ENCODE measurements at regions of chr5 and their contacts with region 1.

Region 1: DNA sequence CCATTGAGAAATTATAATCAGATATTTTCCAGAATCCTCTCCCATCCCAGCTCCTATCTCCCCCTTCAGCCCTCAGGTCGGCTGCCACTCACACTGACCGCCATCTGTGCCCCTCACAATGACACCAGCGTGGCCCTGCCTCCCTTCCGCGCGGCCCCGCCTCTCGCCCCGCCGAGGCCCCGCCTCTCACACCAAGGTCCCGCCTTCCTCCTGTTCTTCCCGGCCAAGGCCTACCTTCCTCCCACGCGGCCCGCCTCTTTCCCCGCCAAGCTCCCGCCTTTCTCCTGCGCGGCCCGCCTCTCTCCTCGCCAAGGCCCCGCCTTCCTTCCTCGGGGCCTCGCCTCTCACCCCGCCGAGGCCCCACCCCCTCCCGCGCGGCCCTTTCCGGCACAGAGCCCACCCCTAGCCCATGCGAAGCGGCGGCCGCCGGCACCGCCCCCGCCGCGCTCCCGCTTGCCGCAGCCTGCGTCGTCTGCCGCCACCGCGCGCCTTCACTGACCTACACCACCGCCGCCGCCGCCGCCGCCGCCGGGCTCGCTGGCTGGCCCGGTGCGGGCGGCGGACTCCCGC is at the start of gene DNAJC21:
- DNase-seq: peak; percentile 98
- ATAC-seq: peak; percentile 88
- H3K4me3 Mint-ChIP-seq: peak within 1 kb of the TSS; percentile 97
- H3K27ac Mint-ChIP-seq: peak within 1 kb of the TSS; percentile 93
- H3K4me1 Mint-ChIP-seq: peaks cover 29% of the 10 kb centered on the region
- H3K27me3 Mint-ChIP-seq: no peaks in the 10 kb centered on the region
- CTCF ChIP-seq: no peak
- total RNA-seq, gene DNAJC21: 44.0 and 48.0 TPM in 2 replicates

Region 2: GRCh38 chr5:34007621-34008600 is 921.3 kb before region 1 on chr5 and contains the start of gene AMACR:
- CTCF ChIA-PET with region 1: no interaction called
- POLR2A ChIA-PET with region 1: interaction called, 11 read pairs
- intact Hi-C with region 1: loop called (anchors 1 kb)
- DNase-seq: peak; percentile 90
- ATAC-seq: peak; percentile 92
- H3K4me3 Mint-ChIP-seq: peak within 1 kb of the TSS; percentile 95
- H3K27ac Mint-ChIP-seq: peak within 1 kb of the TSS; percentile 91
- H3K4me1 Mint-ChIP-seq: peaks cover 23% of the 10 kb centered on the region
- H3K27me3 Mint-ChIP-seq: no peaks in the 10 kb centered on the region
- CTCF ChIP-seq: no peak
- total RNA-seq, gene AMACR: 6.0 and 6.5 TPM in 2 replicates

Region 3: GRCh38 chr5:34838785-34839714 is 90.2 kb before region 1 on chr5 and contains the start of gene TTC23L:
- CTCF ChIA-PET with region 1: no interaction called
- POLR2A ChIA-PET with region 1: interaction called, 14 read pairs
- intact Hi-C with region 1: loop called (anchors 1 kb)
- DNase-seq: peak; percentile 88
- ATAC-seq: peak; percentile 89
- H3K4me3 Mint-ChIP-seq: peak within 1 kb of the TSS; percentile 94
- H3K27ac Mint-ChIP-seq: peak within 1 kb of the TSS; percentile 96
- H3K4me1 Mint-ChIP-seq: peaks cover 13% of the 10 kb centered on the region
- H3K27me3 Mint-ChIP-seq: peaks cover 2% of the 10 kb centered on the region
- CTCF ChIP-seq: no peak
- total RNA-seq, gene TTC23L: not detected in 2 replicates

Region 4: DNA sequence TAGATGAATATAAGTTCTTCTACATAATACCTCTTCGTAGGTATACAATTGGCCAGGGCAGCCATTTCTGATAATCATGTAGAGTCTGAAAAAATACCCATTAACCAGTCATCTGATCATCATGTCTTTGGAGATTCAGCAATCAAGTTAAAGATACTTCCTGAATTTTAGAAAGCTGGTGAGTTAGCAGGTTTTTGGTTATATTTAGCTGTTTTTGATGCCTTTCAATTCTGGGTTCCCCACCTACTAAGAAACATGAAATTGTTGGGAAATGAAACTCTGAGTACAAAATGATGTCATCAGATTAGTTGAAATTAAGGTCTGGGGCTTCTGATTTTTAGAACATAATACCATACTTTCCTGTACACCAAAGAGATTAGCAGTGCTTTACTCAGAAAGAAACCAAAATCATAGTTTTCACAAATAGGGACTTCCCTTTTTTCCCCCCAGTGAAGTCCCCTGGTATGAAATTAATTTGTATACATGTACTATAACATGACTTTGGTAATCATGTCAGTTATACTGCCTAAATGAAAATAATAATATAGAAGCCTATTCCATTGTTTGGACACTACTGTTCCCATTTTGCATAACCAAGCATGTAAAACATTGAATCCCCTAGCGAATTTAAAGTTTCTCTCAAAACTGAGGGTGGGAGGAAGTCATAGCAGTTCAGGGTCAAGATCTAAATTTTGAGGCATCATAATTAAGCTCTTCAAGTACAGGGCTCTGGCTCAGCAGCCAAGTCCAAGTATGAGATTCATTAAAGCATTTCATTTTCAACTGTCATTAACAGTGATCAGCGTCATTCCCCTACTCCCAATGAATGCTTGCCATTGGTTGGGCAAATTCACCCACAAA is 283.1 kb after region 1 on chr5:
- CTCF ChIA-PET with region 1: no interaction called
- POLR2A ChIA-PET with region 1: no interaction called
- intact Hi-C with region 1: loop called (anchors 1 kb)
- DNase-seq: no peak
- ATAC-seq: peak; percentile 86
- H3K4me3 Mint-ChIP-seq: peak overlapping the region; percentile 22
- H3K27ac Mint-ChIP-seq: peak overlapping the region; percentile 92
- H3K4me1 Mint-ChIP-seq: peaks cover 26% of the 10 kb centered on the region
- H3K27me3 Mint-ChIP-seq: peaks cover 2% of the 10 kb centered on the region
- CTCF ChIP-seq: no peak

Region 5: DNA sequence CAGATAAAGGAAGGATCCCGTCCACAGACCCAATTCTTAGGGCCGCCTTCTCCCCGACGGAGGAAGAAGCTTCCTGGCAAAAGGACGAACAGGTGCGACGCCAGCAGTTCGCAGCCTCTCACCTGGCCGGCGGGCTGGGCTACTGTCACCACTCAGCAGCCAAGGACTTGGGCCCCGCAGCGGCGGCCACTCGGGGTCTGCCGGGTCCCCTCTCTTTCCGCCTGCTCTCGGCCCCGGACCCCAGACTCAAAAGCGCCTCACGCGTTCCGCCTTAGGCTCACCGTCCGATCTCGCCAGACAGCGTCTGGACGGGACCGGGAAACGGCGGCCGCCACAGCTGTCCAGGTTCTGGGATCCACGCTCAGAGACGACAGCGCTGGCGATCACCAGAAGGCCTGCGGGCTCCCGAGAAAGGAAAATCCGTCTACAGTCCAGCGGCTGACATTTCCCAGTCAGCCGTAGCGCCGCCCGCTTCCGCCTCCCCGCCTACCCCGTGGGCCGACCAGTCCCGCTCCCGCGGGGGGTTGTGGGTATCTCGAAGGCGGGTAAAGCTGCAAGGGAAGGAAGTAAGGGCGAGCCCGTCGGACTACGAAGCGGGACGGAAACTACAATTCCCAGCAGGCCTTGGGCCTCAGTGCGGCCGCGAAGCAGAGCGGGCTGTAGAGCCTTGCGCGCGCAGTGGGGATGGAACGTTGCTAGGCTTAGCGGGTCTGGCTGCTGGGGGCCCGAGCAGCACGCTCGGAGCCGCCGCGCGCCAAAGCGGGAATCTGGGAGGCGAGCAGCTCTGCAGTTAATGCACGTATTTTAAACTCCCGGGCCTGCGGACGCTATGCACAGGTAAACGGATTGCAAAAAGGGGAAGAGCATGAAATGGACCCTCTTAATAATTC is 1222.4 kb after region 1 on chr5 and contains the starts of genes LMBRD2 and SKP2:
- CTCF ChIA-PET with region 1: no interaction called
- POLR2A ChIA-PET with region 1: interaction called, 3 read pairs
- intact Hi-C with region 1: loop called (anchors 1 kb)
- DNase-seq: peak; percentile 95
- ATAC-seq: peak; percentile 97
- H3K4me3 Mint-ChIP-seq: peak within 1 kb of the TSS; percentile 96
- H3K27ac Mint-ChIP-seq: peak within 1 kb of the TSS; percentile 85
- H3K4me1 Mint-ChIP-seq: peaks cover 40% of the 10 kb centered on the region
- H3K27me3 Mint-ChIP-seq: no peaks in the 10 kb centered on the region
- CTCF ChIP-seq: no peak
- total RNA-seq, gene LMBRD2: 6.4 and 8.9 TPM in 2 replicates
- total RNA-seq, gene SKP2: 18.5 TPM in 2 replicates

Region 6: GRCh38 chr5:36728697-36729543 is 1799.7 kb after region 1 on chr5:
- CTCF ChIA-PET with region 1: no interaction called
- POLR2A ChIA-PET with region 1: interaction called, 3 read pairs
- intact Hi-C with region 1: loop called (anchors 10 kb)
- DNase-seq: no peak
- ATAC-seq: no peak
- H3K4me3 Mint-ChIP-seq: no peak overlapping the region
- H3K27ac Mint-ChIP-seq: no peak overlapping the region
- H3K4me1 Mint-ChIP-seq: peaks cover 24% of the 10 kb centered on the region
- H3K27me3 Mint-ChIP-seq: peaks cover 3% of the 10 kb centered on the region
- CTCF ChIP-seq: peak; percentile 66

Measured in activated B cell treated with CpG ODN at 0.5 μM for 24 hours (primary cell).